Tibial artery (tissue), 4 donors: ENCODE measurements at regions of chr9 and their contacts with region 1.

Region 1: GRCh38 chr9:134641173-134641985 is at the start of gene COL5A1:
- DNase-seq: peak; percentile 91 to 97
- H3K4me3 ChIP-seq: peak within 1 kb of the TSS; percentile 82 to 91
- H3K27ac ChIP-seq: peak within 1 kb of the TSS; percentile 96 to 98
- H3K4me1 ChIP-seq: peaks cover 0 to 44% (median 27%) of the 10 kb centered on the region in 4 donors
- H3K27me3 ChIP-seq: no peaks in the 10 kb centered on the region
- CTCF ChIP-seq: peak; percentile 44 to 60

Region 2: DNA sequence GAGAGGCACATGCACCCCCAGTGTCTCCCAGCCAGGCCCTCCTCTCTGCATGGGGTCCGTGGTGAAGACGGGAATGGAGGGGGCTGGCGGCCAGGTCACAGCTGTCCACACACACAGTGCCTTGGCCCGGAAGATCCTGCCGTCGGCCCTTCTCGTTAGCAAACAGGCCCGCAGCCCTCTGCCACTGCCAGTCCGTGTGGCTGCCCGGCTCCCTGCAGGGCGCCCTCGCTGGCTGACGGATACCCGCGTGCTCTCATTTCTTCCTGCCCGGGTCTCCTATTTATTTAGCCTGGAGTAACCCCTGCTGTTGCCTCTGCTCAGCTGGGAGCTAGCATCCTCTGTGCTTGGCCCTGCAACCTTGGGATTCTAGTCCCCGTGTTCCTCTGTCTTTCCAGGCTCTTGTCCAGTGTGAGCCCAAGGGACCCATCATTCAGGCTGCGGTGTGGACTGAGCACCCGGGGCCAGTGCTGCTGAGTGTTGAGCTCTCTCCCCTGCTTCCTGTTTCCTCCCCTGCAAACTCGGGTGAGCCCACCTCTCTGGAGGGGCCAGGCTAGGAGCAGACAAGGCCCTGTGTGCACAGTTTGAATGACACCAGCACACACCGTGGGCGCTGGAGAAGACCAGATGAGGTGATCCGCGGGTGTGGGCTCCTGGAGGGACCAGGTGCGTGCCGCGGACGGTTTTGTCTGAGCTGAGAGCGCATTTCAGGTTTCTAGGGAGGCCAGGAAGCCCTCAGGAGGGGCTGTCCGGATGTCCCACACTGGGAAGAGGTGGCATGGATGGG is 462.4 kb before region 1 on chr9:
- intact Hi-C with region 1: loop called (anchors 10 kb)
- DNase-seq: peak; percentile 71 to 88
- H3K4me3 ChIP-seq: no peak overlapping the region
- H3K27ac ChIP-seq: no peak overlapping the region
- H3K4me1 ChIP-seq: peaks cover 0 to 35% (median 19%) of the 10 kb centered on the region in 4 donors
- H3K27me3 ChIP-seq: peaks cover 0 to 42% of the 10 kb centered on the region in 2 donors
- CTCF ChIP-seq: no peak